Head of caudate nucleus (tissue), 42 donors: ENCODE measurements at regions of chr7 and their contacts with region 1.

Region 1: GRCh38 chr7:149742075-149742701 is 31.2 kb downstream of the ZNF467 start:
- DNase-seq: peak; percentile 63 to 93 (median 83)

Region 2: DNA sequence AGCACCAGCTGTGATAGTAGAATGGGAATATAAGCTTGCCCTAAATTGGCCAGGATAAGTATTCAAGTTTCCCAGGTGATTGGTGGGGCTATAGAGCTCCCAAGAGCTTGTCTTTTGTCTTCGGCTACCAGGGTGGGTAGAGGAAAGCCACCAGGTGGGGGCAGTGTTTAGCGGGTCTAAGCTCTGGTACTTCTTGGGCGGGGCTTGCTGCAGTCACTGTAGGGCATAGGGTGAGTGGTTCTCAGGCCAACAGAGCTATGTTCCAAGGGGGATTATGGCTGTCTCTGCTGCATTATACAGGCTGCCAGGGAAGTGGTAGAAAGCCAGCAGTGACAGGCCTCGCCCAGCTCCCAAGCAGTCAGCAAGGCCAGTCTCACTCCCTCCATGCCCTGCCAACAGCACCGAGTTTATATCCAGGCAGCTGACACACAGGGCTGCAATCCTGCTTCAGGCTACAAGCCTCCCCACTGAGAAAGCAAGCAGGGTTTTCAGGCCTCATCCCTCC is 79.5 kb before region 1 on chr7:
- intact Hi-C with region 1: loop called (anchors 5 kb)
- DNase-seq: peak in 39 of 42 donors; percentile 7 to 90 (median 63)

Region 3: DNA sequence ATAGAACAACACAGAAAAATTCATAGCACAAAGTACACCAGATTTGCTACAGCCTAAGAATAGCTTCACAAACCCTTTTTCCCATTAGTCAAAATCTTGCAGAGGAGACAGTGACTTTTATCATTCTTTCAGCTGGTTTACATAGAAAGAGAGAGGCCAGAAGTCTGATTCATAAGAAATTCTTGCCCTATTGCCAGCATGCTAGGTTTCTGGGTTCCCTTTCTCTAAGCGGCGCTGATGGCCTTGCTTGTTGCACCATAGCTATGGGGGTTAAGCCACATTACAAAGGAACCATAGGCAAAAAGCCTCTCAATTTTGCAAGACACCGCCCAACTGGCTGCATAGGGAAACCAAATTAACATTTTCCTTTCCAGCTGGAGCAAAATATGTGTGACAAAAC is 56.2 kb before region 1 on chr7:
- intact Hi-C with region 1: no loop called
- DNase-seq: peak in 1 of 42 donors; percentile 1